ENCODE measurements at regions of chr1 and their contacts with region 1.

Region 1: GRCh38 chr1:89454845-89455521 is 69.6 kb upstream of the LRRC8B start:
- DNase-seq: peak in 1 of 2 donors; percentile 18
- ATAC-seq: peak in 2 of 4 donors; percentile 40 to 75
- H3K4me3 ChIP-seq: no peak overlapping the region
- H3K27ac ChIP-seq: no peak overlapping the region
- H3K4me1 ChIP-seq: no peaks in the 10 kb centered on the region
- H3K27me3 ChIP-seq: no peaks in the 10 kb centered on the region
- CTCF ChIP-seq: peak; percentile 66

Region 2: GRCh38 chr1:89005286-89006151 is 449.5 kb before region 1 on chr1:
- intact Hi-C with region 1: loop called in 1 of 2 experiments (anchors 2 kb)
- DNase-seq: no peak
- ATAC-seq: no peak
- H3K4me3 ChIP-seq: no peak overlapping the region
- H3K27ac ChIP-seq: no peak overlapping the region
- H3K4me1 ChIP-seq: no peaks in the 10 kb centered on the region
- H3K27me3 ChIP-seq: no peaks in the 10 kb centered on the region
- CTCF ChIP-seq: no peak

Region 3: GRCh38 chr1:89363196-89363595 is 91.8 kb before region 1 on chr1:
- intact Hi-C with region 1: no loop called
- DNase-seq: no peak
- ATAC-seq: no peak
- H3K4me3 ChIP-seq: no peak overlapping the region
- H3K27ac ChIP-seq: no peak overlapping the region
- H3K4me1 ChIP-seq: no peaks in the 10 kb centered on the region
- H3K27me3 ChIP-seq: no peaks in the 10 kb centered on the region
- CTCF ChIP-seq: no peak

Region 4: GRCh38 chr1:89425056-89425455 is 29.9 kb before region 1 on chr1:
- intact Hi-C with region 1: no loop called
- DNase-seq: no peak
- ATAC-seq: no peak
- H3K4me3 ChIP-seq: no peak overlapping the region
- H3K27ac ChIP-seq: no peak overlapping the region
- H3K4me1 ChIP-seq: no peaks in the 10 kb centered on the region
- H3K27me3 ChIP-seq: no peaks in the 10 kb centered on the region
- CTCF ChIP-seq: no peak

Region 5: DNA sequence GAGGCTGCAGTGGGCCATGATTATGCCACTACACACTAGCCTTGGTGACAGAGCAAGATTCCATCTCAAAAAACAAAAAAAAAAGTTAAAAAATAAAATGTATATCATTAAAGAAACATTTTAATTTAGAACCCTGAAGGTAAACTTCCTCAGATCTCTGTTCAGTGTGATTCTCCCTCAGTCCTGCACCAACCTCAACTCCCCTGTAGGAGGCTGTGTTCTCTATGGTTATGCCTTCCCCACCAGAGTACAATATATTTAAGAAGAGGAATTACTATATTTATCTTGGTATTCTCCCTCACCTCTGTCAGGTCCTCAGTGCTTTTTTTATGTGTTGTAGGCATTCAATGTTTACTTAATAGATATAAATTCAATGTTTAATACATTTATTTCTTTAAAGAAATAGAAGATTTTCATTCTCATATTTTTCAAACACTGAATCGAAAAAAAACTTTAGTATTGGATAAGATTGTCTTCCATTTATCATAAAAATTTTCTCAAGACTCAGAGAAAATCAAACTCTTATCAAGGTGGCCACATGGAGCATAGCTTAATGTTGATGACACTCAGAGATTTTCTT is 64.9 kb after region 1 on chr1:
- intact Hi-C with region 1: no loop called
- DNase-seq: no peak
- ATAC-seq: no peak
- H3K4me3 ChIP-seq: no peak overlapping the region
- H3K27ac ChIP-seq: no peak overlapping the region
- H3K4me1 ChIP-seq: peaks cover 16% of the 10 kb centered on the region
- H3K27me3 ChIP-seq: no peaks in the 10 kb centered on the region
- CTCF ChIP-seq: peak; percentile 51

Measured in psoas muscle (tissue), 8 donors.